Natural killer cell (primary cell): ENCODE measurements at regions of chrX and their contacts with region 1.

Region 1: DNA sequence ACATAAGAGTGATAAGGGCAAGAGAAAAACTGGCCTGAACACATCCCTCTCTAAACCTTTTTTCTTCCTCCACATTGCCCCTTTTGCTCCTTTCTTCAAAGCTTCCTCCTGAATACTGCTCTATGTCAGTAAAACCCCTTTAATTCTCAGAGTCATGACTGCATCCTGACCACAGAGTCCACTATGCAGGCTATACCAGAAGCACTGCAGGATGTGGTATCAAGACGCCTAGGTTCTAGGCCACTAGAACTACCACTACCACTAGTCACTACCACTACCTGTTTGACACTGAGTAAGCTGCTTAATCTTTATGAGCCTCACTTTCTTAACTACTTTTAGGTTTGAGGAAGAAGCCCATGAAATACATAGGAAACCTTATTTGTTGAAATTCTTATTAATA is 38.7 kb downstream of the ARHGEF9 start:
- DNase-seq: peak; percentile 19 to 57
- ATAC-seq: peak; percentile 90 to 99 (median 93)
- H3K4me3 ChIP-seq: no peak overlapping the region
- H3K4me3 Mint-ChIP-seq: peak overlapping the region; percentile 79
- H3K27ac ChIP-seq: peak overlapping the region; percentile 79
- H3K27ac Mint-ChIP-seq: peak overlapping the region; percentile 91 to 92
- H3K4me1 ChIP-seq: peaks cover 47% of the 10 kb centered on the region
- H3K4me1 Mint-ChIP-seq: peaks cover 86 to 87% of the 10 kb centered on the region in 2 donors
- H3K27me3 ChIP-seq: no peaks in the 10 kb centered on the region
- H3K27me3 Mint-ChIP-seq: no peaks in the 10 kb centered on the region
- CTCF ChIP-seq: no peak

Region 2: GRCh38 chrX:63350941-63351616 is 395.2 kb before region 1 on chrX and contains the start of gene SPIN4:
- intact Hi-C with region 1: loop called (anchors 5 kb)
- DNase-seq: peak; percentile 71 to 73
- ATAC-seq: peak; percentile 94 to 96 (median 95)
- H3K4me3 ChIP-seq: peak within 1 kb of the TSS; percentile 83
- H3K4me3 Mint-ChIP-seq: peak within 1 kb of the TSS; percentile 90
- H3K27ac ChIP-seq: peak within 1 kb of the TSS; percentile 67
- H3K27ac Mint-ChIP-seq: peak within 1 kb of the TSS; percentile 77 to 89
- H3K4me1 ChIP-seq: peaks cover 4% of the 10 kb centered on the region
- H3K4me1 Mint-ChIP-seq: peaks cover 18 to 23% of the 10 kb centered on the region in 2 donors
- H3K27me3 ChIP-seq: no peaks in the 10 kb centered on the region
- H3K27me3 Mint-ChIP-seq: no peaks in the 10 kb centered on the region
- CTCF ChIP-seq: no peak
- total RNA-seq, gene SPIN4: 9.6 to 12.9 (median 11.0) TPM

Region 3: GRCh38 chrX:63525491-63525890 is 220.8 kb before region 1 on chrX:
- intact Hi-C with region 1: loop called (anchors 5 kb)
- DNase-seq: peak in 1 of 2 donors; percentile 1
- ATAC-seq: peak; percentile 73 to 82 (median 77)
- H3K4me3 ChIP-seq: no peak overlapping the region
- H3K4me3 Mint-ChIP-seq: peak overlapping the region; percentile 70
- H3K27ac ChIP-seq: peak overlapping the region; percentile 60
- H3K27ac Mint-ChIP-seq: peak overlapping the region; percentile 74 to 86
- H3K4me1 ChIP-seq: peaks cover 21% of the 10 kb centered on the region
- H3K4me1 Mint-ChIP-seq: peaks cover 45 to 56% of the 10 kb centered on the region in 2 donors
- H3K27me3 ChIP-seq: no peaks in the 10 kb centered on the region
- H3K27me3 Mint-ChIP-seq: no peaks in the 10 kb centered on the region
- CTCF ChIP-seq: no peak

Region 4: GRCh38 chrX:63673896-63674295 is 72.4 kb before region 1 on chrX:
- intact Hi-C with region 1: no loop called
- DNase-seq: no peak
- ATAC-seq: no peak
- H3K4me3 ChIP-seq: no peak overlapping the region
- H3K4me3 Mint-ChIP-seq: no peak overlapping the region
- H3K27ac ChIP-seq: no peak overlapping the region
- H3K27ac Mint-ChIP-seq: no peak overlapping the region
- H3K4me1 ChIP-seq: no peaks in the 10 kb centered on the region
- H3K4me1 Mint-ChIP-seq: peaks cover 12 to 14% of the 10 kb centered on the region in 2 donors
- H3K27me3 ChIP-seq: no peaks in the 10 kb centered on the region
- H3K27me3 Mint-ChIP-seq: no peaks in the 10 kb centered on the region
- CTCF ChIP-seq: no peak